ENCODE measurements at regions of chr9 and their contacts with region 1.

Region 1: DNA sequence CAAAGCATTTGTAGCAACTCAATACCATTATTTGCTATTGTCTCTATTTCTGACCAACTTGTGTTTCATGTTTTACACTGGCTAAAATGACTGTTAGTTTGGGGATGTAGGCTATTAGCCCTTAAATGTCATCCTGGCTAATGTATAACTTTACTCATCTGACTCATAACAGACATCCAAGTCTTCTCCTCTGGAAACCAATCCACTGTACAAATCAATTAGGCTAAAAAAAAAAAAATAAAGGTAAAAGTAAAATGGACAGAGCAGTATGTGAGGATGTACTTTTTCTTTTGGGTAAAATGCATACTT is 20.6 kb downstream of the MEGF9 start:
- DNase-seq: no peak
- H3K4me3 Mint-ChIP-seq: no peak overlapping the region
- H3K27ac Mint-ChIP-seq: no peak overlapping the region
- H3K4me1 Mint-ChIP-seq: peaks cover 34% of the 10 kb centered on the region
- H3K27me3 Mint-ChIP-seq: no peaks in the 10 kb centered on the region

Region 2: GRCh38 chr9:120714088-120714845 is 20.6 kb after region 1 on chr9 and contains the start of gene MEGF9:
- intact Hi-C with region 1: loop called (anchors 2 kb)
- DNase-seq: peak; percentile 96
- H3K4me3 Mint-ChIP-seq: peak within 1 kb of the TSS; percentile 87
- H3K27ac Mint-ChIP-seq: peak within 1 kb of the TSS; percentile 74
- H3K4me1 Mint-ChIP-seq: peaks cover 35% of the 10 kb centered on the region
- H3K27me3 Mint-ChIP-seq: no peaks in the 10 kb centered on the region
- total RNA-seq, gene MEGF9: 5.0 TPM in 2 replicates

Region 3: GRCh38 chr9:120729791-120730241 is 36.2 kb after region 1 on chr9:
- intact Hi-C with region 1: no loop called
- DNase-seq: no peak
- H3K4me3 Mint-ChIP-seq: no peak overlapping the region
- H3K27ac Mint-ChIP-seq: no peak overlapping the region
- H3K4me1 Mint-ChIP-seq: peaks cover 10% of the 10 kb centered on the region
- H3K27me3 Mint-ChIP-seq: no peaks in the 10 kb centered on the region

Measured in activated T-helper 2 cell treated with anti-CD3 and anti-CD28 coated beads, Interferon-gamma antibody, Interleukin-2, Interleukin-4, amounts not matched to agents 10 μg/mL and 5 μg/mL and 100 μg/mL, durations not matched to agents 14 hours and 24 hours and 36 hours (primary cell).